AG04450 (cell line): ENCODE measurements at regions of chr4 and their contacts with region 1.

Region 1: DNA sequence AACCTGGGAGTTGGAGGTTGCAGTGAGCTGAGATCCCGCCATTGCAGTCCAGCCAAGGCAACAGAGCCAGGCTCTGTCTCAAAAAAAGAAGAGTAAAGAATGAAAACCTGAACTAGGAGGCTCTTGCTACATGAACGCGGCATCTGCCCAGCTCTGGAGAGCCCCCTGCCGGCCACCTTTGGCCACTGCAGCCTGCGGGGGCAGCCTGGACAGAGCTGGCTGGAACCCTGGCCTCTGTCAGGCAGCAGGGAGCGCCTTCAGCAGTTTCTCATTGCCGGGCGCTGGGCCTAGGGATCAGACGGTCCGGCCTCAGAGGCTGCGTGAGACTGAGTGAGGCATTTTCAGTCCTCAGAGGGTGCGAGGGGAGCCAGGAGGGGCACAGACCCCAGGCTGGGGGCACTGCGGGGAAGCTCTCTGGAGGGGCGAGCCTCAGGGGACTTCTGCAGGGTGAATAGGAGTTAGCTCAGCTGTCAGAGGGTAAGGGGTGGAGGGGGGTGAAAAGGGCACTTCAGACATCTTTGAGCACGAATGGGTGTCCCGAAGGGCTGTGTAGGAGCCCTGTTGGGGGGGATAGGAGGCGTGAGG is 17.5 kb downstream of the DOK7 start:
- DNase-seq: peak; percentile 55
- H3K4me3 ChIP-seq: no peak overlapping the region
- H3K27ac ChIP-seq: no peak overlapping the region
- H3K27me3 ChIP-seq: peaks cover 35% of the 10 kb centered on the region
- CTCF ChIP-seq: peak; percentile 98

Region 2: GRCh38 chr4:3106339-3107186 is 374.1 kb before region 1 on chr4:
- CTCF ChIA-PET with region 1: interaction called, 29 read pairs
- POLR2A ChIA-PET with region 1: no interaction called
- DNase-seq: peak; percentile 73
- H3K4me3 ChIP-seq: no peak overlapping the region
- H3K27ac ChIP-seq: peak overlapping the region; percentile 55
- H3K27me3 ChIP-seq: no peaks in the 10 kb centered on the region
- CTCF ChIP-seq: peak; percentile 99

Region 3: GRCh38 chr4:3223956-3224748 is 256.5 kb before region 1 on chr4:
- CTCF ChIA-PET with region 1: interaction called, 12 read pairs
- POLR2A ChIA-PET with region 1: no interaction called
- DNase-seq: no peak
- H3K4me3 ChIP-seq: no peak overlapping the region
- H3K27ac ChIP-seq: no peak overlapping the region
- H3K27me3 ChIP-seq: no peaks in the 10 kb centered on the region
- CTCF ChIP-seq: no peak

Region 4: DNA sequence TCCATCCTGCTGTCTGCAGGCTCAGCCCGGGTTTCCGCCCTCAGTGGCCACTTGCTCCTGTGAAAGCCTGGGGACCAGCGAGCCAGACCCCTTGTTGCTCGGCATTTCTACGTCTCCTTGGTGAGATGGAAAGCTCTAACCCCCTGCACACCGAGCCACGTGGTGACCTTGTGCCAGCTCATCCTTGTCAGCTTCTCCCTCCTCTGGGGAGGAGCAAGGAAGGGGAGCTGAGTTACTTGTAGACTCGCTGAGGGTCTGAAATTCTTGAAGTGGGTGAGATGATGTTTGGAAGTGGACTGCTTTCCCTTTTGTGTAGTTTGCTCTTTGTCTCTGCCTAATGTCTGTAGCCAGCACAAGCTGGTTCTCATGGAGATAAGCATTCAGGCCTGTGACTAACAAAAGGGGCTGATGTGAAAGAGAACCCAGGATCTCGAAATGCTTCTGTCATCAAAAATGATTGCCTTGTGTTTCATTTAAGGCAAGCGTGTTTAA is 158.5 kb before region 1 on chr4:
- CTCF ChIA-PET with region 1: no interaction called
- POLR2A ChIA-PET with region 1: no interaction called
- DNase-seq: no peak
- H3K4me3 ChIP-seq: no peak overlapping the region
- H3K27ac ChIP-seq: no peak overlapping the region
- H3K27me3 ChIP-seq: no peaks in the 10 kb centered on the region
- CTCF ChIP-seq: no peak

Region 5: GRCh38 chr4:3369781-3370674 is 110.6 kb before region 1 on chr4:
- CTCF ChIA-PET with region 1: interaction called, 10 read pairs
- POLR2A ChIA-PET with region 1: no interaction called
- DNase-seq: peak; percentile 57
- H3K4me3 ChIP-seq: peak overlapping the region; percentile 49
- H3K27ac ChIP-seq: peak overlapping the region; percentile 80
- H3K27me3 ChIP-seq: no peaks in the 10 kb centered on the region
- CTCF ChIP-seq: no peak; the same call in 1 of the 2 replicates

Region 6: GRCh38 chr4:3470244-3471097 is 10.1 kb before region 1 on chr4:
- CTCF ChIA-PET with region 1: interaction called, 25 read pairs
- POLR2A ChIA-PET with region 1: no interaction called
- DNase-seq: peak; percentile 37
- H3K4me3 ChIP-seq: no peak overlapping the region
- H3K27ac ChIP-seq: no peak overlapping the region
- H3K27me3 ChIP-seq: peaks cover 21% of the 10 kb centered on the region
- CTCF ChIP-seq: no peak

Region 7: GRCh38 chr4:3505231-3505630 is 24.6 kb after region 1 on chr4:
- CTCF ChIA-PET with region 1: interaction called, 11 read pairs
- POLR2A ChIA-PET with region 1: no interaction called
- DNase-seq: no peak
- H3K4me3 ChIP-seq: no peak overlapping the region
- H3K27ac ChIP-seq: no peak overlapping the region
- H3K27me3 ChIP-seq: no peaks in the 10 kb centered on the region
- CTCF ChIP-seq: no peak

Region 8: DNA sequence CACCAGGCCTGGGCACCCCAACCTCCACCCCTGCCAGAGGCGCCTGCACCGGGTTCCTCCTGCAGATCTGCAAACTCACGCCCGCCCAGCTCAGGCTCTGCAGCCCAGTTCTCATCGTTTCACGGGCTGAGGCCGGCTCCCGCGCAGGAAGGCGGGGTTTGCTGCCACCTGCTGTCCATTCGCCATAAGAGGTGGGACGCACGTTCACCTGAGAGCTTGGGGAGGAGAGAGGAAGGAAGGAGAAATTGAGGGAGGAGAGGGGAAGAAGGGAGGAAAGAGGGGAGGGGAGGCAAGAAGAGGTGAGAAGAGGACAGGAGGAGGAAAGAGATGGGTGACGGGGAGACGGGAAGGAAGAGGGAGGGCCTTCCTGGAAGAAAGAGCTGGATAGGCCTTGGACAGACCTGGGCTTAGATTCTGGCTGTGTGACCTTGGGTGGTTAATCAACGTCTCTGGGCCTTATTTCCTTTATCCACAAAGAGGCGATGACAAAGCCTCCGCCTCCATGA is 400.0 kb after region 1 on chr4:
- CTCF ChIA-PET with region 1: interaction called, 11 read pairs
- POLR2A ChIA-PET with region 1: no interaction called
- DNase-seq: no peak
- H3K4me3 ChIP-seq: no peak overlapping the region
- H3K27ac ChIP-seq: no peak overlapping the region
- H3K27me3 ChIP-seq: peaks cover 50% of the 10 kb centered on the region
- CTCF ChIP-seq: peak; percentile 58